CD4-positive, alpha-beta T cell (primary cell): ENCODE measurements at regions of chr17 and their contacts with region 1.

Region 1: DNA sequence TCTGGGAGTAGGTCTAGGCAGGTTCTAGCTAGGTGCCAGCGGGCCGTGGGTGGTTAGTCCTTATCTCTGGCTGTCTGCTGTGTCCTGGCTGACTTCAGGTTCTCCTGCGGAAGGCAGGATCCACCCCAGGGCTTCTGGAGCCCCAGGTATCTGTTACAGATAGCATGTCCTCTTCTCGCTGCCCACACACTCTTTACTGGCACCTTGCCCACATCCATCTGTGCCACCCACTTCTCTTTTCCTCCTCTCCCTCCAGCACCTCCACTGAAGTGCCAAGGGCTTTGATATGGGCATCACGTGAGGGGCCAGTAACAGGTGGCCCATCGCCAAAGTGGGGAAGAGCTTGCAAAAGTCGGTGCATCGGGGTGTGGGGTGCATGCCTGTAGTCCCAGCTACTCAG is 4.6 kb upstream of the MPP2 start:
- DNase-seq: no peak
- ATAC-seq: no peak
- H3K4me3 ChIP-seq: no peak overlapping the region
- H3K4me3 Mint-ChIP-seq: no peak overlapping the region
- H3K27ac ChIP-seq: no peak overlapping the region
- H3K27ac Mint-ChIP-seq: no peak overlapping the region
- H3K4me1 ChIP-seq: peaks cover 19% of the 10 kb centered on the region
- H3K4me1 Mint-ChIP-seq: peaks cover 20% of the 10 kb centered on the region
- H3K27me3 ChIP-seq: peaks cover 0 to 10% of the 10 kb centered on the region in 2 experiments
- H3K27me3 Mint-ChIP-seq: peaks cover 14% of the 10 kb centered on the region
- CTCF ChIP-seq: no peak

Region 2: GRCh38 chr17:43927060-43927864 is 15.4 kb after region 1 on chr17:
- CTCF ChIA-PET with region 1: interaction called, 7 read pairs
- POLR2A ChIA-PET with region 1: interaction called, 5 read pairs
- intact Hi-C with region 1: loop called in 1 of 2 experiments (anchors 2 kb)
- DNase-seq: peak in 4 of 14 experiments; percentile 8 to 39 (median 34)
- ATAC-seq: peak; percentile 66
- H3K4me3 ChIP-seq: peak overlapping the region; percentile 44
- H3K4me3 Mint-ChIP-seq: peak overlapping the region; percentile 87
- H3K27ac ChIP-seq: no peak overlapping the region
- H3K27ac Mint-ChIP-seq: peak overlapping the region; percentile 72
- H3K4me1 ChIP-seq: peaks cover 17% of the 10 kb centered on the region
- H3K4me1 Mint-ChIP-seq: peaks cover 23% of the 10 kb centered on the region
- H3K27me3 ChIP-seq: peaks cover 0 to 4% of the 10 kb centered on the region in 2 experiments
- H3K27me3 Mint-ChIP-seq: no peaks in the 10 kb centered on the region
- CTCF ChIP-seq: no peak

Region 3: GRCh38 chr17:43994272-43995149 is 82.6 kb after region 1 on chr17:
- CTCF ChIA-PET with region 1: interaction called, 4 read pairs
- POLR2A ChIA-PET with region 1: no interaction called
- intact Hi-C with region 1: loop called in 1 of 2 experiments (anchors 5 kb)
- DNase-seq: peak; percentile 50 to 82 (median 61)
- ATAC-seq: peak; percentile 92
- H3K4me3 ChIP-seq: peak overlapping the region; percentile 33
- H3K4me3 Mint-ChIP-seq: no peak overlapping the region
- H3K27ac ChIP-seq: no peak overlapping the region
- H3K27ac Mint-ChIP-seq: no peak overlapping the region
- H3K4me1 ChIP-seq: peaks cover 10% of the 10 kb centered on the region
- H3K4me1 Mint-ChIP-seq: no peaks in the 10 kb centered on the region
- H3K27me3 ChIP-seq: peaks cover 9 to 13% of the 10 kb centered on the region in 2 experiments
- H3K27me3 Mint-ChIP-seq: peaks cover 33% of the 10 kb centered on the region
- CTCF ChIP-seq: peak; percentile 77